Sigmoid colon (tissue), 7 donors: ENCODE measurements at regions of chr14 and their contacts with region 1.

Region 1: GRCh38 chr14:25003537-25003936 is 46.4 kb downstream of the STXBP6 start:
- DNase-seq: no peak
- H3K4me3 ChIP-seq: no peak overlapping the region
- H3K27ac ChIP-seq: no peak overlapping the region
- H3K4me1 ChIP-seq: peaks cover 0 to 34% (median 17%) of the 10 kb centered on the region in 4 donors
- H3K27me3 ChIP-seq: no peaks in the 10 kb centered on the region
- CTCF ChIP-seq: no peak
- EP300 ChIP-seq: no peak
- POLR2A ChIP-seq: no peak

Region 2: DNA sequence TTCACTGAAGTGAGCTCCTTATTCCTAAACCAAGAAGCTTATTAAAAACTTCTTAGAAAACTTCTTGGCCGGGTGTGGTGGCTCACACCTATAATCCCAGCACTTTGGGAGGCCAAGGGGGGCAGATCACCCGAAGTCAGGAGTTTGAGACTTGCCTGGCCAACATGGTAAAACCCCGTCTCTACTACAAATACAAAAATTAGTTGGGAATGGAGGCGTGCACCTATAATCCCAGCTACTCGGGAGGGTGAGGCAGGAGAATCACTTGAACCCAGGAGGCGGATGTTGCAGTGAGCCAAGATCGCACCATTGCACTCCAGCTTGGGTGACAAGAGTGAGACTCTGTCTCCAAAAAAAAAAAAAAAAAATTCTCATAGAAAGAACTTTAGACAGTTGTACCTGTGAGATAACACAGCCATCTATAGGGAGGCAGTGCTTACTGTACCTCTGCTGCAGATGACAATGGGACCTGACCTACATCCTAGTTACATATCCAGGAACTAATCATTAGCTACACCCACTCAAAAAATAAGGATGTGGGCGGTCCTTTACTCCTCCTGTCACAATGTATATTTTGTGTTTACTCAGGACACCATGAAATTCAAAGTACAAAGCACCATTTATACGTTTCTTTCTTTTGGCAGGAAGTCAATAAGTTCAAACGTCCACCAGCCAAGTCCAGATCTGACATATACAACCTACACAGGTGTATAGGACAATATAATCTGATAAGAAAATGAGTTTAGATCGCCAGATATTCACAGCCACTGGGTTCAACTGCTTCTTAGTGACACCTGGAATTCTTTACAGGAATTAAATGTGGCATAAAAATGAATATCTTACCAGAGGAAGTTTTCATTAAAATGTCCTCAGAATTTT is 31.5 kb after region 1 on chr14:
- intact Hi-C with region 1: loop called (anchors 5 kb)
- DNase-seq: no peak
- H3K4me3 ChIP-seq: no peak overlapping the region
- H3K27ac ChIP-seq: no peak overlapping the region
- H3K4me1 ChIP-seq: peaks cover 0 to 12% (median 7%) of the 10 kb centered on the region in 4 donors
- H3K27me3 ChIP-seq: no peaks in the 10 kb centered on the region
- CTCF ChIP-seq: no peak
- EP300 ChIP-seq: no peak
- POLR2A ChIP-seq: no peak

Region 3: DNA sequence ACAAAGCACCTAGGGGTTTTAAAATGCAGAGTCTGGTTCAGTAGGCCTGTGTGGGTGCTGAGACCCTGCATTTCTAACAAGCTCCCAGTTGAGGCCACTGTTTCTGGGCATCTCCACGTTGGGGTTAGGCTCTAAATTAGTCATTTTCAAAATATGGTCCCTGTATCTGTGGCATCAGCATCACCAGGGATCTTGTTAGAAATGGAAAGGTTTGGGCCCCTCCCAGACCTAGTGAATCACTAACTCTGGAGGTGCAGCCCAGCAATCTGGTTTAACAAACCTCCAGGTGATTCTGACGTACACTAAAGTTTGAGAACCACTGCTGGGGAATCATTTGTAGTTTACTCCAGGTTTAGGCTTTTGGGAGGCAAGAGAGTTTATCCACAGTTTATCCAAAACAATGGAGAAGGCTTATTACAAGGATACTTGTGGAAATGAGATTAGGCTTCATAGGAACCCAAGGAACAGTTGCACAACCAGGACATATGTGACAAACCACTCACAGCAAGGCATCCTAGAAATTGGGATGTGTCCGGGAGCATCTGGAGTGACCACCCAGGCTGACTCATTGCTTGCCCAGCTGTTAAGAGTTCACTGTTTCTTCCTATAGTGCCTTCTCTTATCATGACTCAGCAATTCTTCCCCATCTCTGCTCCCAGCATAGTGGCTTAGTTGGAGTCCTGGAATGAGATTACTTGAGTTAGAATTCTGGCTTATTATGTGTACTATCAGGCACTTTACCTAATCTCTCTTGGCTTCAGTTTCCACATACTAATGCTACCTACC is 118.0 kb after region 1 on chr14:
- intact Hi-C with region 1: no loop called
- DNase-seq: no peak
- H3K4me3 ChIP-seq: no peak overlapping the region
- H3K27ac ChIP-seq: no peak overlapping the region
- H3K4me1 ChIP-seq: peaks cover 0 to 7% (median 0%) of the 10 kb centered on the region in 4 donors
- H3K27me3 ChIP-seq: no peaks in the 10 kb centered on the region
- CTCF ChIP-seq: no peak
- EP300 ChIP-seq: no peak
- POLR2A ChIP-seq: no peak